Cardiac septum (tissue), 1 donor: ENCODE measurements at regions of chr14 and their contacts with region 1.

Region 1: DNA sequence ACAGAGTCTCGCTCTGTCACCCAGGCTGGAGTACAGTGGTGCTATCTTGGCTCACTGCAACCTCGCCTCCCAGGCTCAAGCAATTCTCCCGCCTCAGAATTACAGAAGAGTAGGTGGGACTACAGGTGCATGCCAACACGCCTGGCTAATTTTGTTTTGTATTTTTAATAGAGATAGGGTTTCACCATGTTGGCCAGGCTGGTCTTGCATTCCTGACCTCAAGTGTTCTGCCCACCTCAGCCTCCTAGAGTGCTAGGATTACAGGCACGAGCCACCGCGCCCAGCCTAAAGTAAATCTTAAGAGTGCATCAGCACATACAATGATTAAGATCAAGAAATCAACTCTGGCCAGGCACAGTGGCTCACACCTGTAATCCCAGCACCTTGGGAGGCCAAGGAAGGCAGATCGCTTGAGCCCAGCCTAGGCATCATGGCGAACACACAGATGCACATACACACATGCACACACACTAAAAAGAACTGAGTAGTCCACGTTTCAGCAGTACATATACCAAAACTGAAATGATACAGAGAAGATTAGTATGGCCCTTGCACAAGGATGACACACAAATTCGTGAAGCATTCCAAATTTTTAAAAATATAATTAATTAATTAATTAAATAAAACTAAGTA is 65.0 kb downstream of the HECTD1 start:
- DNase-seq: no peak

Region 2: GRCh38 chr14:31357279-31357678 is 214.7 kb after region 1 on chr14:
- intact Hi-C with region 1: loop called (anchors 10 kb)
- DNase-seq: no peak